ENCODE measurements at regions of chr12 and their contacts with region 1.

Region 1: GRCh38 chr12:66860752-66861750 is 182.2 kb upstream of the GRIP1 start:
- DNase-seq: peak; percentile 79
- H3K4me3 ChIP-seq: no peak overlapping the region
- H3K27ac ChIP-seq: no peak overlapping the region
- H3K4me1 ChIP-seq: no peaks in the 10 kb centered on the region
- H3K27me3 ChIP-seq: no peaks in the 10 kb centered on the region
- CTCF ChIP-seq: peak; percentile 78 to 87
- POLR2A ChIP-seq: no peak

Region 2: DNA sequence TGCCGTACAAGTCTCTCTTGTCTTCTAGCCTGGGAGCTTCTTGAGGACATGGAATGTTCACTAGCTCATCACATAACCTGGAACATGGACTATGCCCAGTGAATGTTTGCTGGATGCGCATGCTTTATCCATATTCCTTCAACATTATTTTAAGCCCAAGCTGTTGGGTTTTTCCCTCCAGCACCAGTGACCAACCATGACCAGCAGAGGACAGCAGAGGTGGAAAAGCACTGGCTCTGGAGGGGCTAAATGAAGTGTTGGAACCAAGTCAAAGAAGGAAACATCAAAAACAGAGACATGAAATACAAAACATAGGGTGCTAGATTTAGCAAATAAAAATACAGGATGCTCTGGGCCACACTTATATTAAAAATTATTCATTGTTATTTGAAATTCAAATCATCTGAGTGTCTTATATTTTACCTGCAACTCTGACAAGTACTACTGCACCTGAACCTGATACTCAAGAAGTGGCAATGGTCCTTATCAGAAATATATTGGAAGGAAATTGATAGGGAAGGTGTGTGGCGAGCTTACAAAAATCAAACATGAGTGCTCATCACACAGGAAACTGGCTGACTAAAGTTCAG is 581.8 kb before region 1 on chr12:
- CTCF ChIA-PET with region 1: interaction called, 6 read pairs
- POLR2A ChIA-PET with region 1: no interaction called
- dilution Hi-C with region 1: no loop called
- intact Hi-C with region 1: loop called (anchors 5 kb)
- DNase-seq: peak; percentile 48
- H3K4me3 ChIP-seq: no peak overlapping the region
- H3K27ac ChIP-seq: no peak overlapping the region
- H3K4me1 ChIP-seq: peaks cover 2% of the 10 kb centered on the region
- H3K27me3 ChIP-seq: no peaks in the 10 kb centered on the region
- CTCF ChIP-seq: peak; percentile 63 to 69
- POLR2A ChIP-seq: no peak

Region 3: DNA sequence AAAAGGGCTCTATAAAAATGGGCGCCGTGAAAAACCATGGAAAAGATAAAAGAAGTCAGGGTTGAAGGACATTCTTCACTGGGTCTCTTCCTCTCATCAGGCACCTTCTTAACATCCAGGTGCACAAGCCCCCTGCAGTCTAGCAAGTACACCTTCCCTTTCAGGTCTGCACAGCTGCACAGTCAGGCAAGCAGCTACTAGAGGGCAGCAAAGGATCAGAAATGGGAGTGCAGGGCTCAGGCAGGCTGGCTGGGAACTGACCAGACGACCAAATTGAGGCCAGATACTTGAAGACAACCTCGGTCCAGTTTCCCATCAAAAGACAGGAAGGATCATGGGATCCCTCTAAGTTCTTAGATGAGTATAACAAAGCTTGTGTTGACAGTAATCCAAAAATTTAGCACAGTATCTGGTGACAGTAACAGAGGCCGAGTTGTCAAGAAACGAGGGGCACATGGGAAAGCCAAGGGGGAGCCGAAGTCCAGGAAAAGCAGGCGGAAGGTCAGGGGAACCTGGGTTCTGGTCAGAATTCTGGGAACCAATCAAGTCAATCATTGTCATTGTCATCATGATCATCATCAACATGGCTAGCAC is 172.1 kb before region 1 on chr12:
- CTCF ChIA-PET with region 1: interaction called, 7 read pairs
- POLR2A ChIA-PET with region 1: no interaction called
- dilution Hi-C with region 1: no loop called
- intact Hi-C with region 1: loop called (anchors 1 kb)
- DNase-seq: peak; percentile 20
- H3K4me3 ChIP-seq: no peak overlapping the region
- H3K27ac ChIP-seq: no peak overlapping the region
- H3K4me1 ChIP-seq: no peaks in the 10 kb centered on the region
- H3K27me3 ChIP-seq: peaks cover 9% of the 10 kb centered on the region in 2 experiments
- CTCF ChIP-seq: peak in 1 of 2 donors; percentile 37
- POLR2A ChIP-seq: no peak

Region 4: DNA sequence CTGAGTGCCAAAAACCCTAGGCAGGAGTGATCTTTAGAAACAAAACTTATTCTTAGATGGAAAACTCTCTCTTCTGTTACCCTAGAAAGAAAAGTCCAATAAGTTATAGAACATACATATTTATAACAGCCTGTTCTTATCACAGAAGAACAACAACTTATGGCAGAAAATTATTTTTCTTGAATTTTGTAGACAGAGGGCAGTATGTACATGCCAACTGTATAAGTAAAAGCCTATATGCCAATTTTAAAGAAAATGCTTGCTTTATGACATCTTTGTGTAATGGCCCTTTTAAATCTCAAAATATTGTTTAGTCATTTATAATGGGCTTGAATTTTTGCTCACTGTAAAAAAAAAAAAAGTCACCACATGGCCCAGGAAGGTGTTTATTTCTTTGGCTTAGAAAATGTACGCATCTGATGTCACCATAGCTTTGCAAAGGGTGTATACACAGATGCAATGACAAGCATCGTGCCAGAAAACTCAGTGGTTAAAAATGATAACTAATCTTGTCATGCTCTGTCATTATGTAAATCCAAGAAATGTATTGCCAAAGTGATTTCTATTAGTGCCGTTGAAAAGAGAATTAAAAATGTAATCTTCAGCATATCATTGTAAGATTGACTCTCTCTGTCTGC is 143.9 kb before region 1 on chr12:
- CTCF ChIA-PET with region 1: no interaction called
- POLR2A ChIA-PET with region 1: no interaction called
- dilution Hi-C with region 1: no loop called
- intact Hi-C with region 1: loop called (anchors 2 kb)
- DNase-seq: no peak
- H3K4me3 ChIP-seq: no peak overlapping the region
- H3K27ac ChIP-seq: no peak overlapping the region
- H3K4me1 ChIP-seq: no peaks in the 10 kb centered on the region
- H3K27me3 ChIP-seq: peaks cover 2 to 19% of the 10 kb centered on the region in 2 experiments
- CTCF ChIP-seq: no peak
- POLR2A ChIP-seq: no peak

Region 5: DNA sequence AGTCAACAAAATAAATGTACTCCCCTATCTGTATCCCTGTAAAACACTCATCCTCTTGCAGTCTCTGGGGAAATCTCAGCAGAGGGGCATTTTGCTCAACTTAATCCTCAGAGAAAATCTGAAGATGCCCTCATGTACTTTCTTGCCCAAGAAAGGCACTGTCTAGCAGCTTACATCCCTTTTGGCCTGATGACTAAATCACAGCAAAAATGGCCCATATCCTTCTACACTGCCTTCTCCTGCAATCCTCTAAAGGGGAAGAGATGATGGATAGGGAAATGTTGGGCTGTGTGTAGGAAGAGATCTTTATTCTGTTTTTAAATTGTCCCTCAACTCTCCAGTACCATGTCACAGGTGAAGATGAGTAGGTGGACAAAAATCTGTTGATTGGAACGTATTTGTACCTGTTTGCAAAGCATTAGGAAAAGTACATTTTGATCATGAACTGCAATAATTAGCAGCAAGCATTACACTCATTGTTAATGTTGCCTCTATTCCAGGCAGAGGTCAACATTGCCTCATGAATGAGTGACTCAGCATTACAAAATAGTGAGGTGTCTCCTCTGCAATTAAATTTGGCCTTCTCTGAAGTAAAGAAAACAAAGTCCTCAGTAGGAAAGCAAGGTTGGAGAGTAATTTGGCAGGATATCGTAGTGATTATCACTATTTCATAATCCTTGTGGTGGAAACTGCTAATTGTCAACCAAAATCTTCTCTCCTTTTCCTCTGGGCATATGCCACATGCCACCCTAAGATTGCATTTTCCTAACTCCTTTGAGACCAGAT is 235.7 kb after region 1 on chr12:
- CTCF ChIA-PET with region 1: no interaction called
- POLR2A ChIA-PET with region 1: no interaction called
- dilution Hi-C with region 1: no loop called
- intact Hi-C with region 1: no loop called
- DNase-seq: no peak
- H3K4me3 ChIP-seq: no peak overlapping the region
- H3K27ac ChIP-seq: no peak overlapping the region
- H3K4me1 ChIP-seq: no peaks in the 10 kb centered on the region
- H3K27me3 ChIP-seq: no peaks in the 10 kb centered on the region
- CTCF ChIP-seq: no peak
- POLR2A ChIP-seq: no peak